Activated naive CD4-positive, alpha-beta T cell treated with anti-CD3 and anti-CD28 coated beads for 36 hours (primary cell): ENCODE measurements at regions of chr5 and their contacts with region 1.

Region 1: DNA sequence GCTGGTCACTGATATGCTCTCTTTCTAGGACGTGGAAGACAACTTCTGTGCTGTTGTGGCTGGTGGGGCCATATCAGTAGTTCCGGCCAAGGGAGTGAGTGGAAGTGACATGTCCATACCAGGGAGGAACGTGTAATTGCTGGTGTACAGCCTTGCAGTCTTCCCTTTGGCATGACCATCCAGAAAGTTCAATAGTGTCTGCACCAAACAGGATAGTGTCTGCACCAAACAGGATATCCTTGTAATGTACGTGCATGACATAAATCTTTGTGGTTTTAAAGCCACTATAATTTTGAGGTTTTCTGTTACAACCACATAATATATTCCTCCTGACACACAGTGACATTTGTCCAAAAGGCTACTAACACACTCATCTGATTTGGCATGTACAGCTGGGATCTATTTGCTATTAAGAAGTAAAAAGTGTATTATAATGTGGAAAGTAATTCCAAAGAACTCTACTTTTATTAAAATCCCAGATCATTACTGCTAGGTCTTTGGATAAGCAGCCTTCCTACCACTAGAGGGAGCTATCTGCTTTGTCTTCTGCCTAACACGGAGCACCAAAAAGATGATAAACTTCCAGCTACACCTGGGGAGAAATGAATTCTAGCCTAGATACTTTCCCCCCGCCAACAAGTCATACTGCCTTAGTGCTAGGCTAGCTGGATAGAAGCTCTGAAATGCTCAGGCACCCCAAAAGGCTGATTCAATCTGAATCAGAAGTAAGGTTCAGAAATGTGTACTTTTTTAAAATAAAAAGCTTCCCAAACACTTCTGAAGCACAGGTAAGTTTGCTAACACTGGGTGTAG is 52.7 kb downstream of the RNF145 start:
- DNase-seq: peak; percentile 58
- H3K4me3 Mint-ChIP-seq: no peak overlapping the region
- H3K27ac Mint-ChIP-seq: peak overlapping the region; percentile 35
- H3K4me1 Mint-ChIP-seq: peaks cover 36% of the 10 kb centered on the region
- H3K27me3 Mint-ChIP-seq: no peaks in the 10 kb centered on the region

Region 2: DNA sequence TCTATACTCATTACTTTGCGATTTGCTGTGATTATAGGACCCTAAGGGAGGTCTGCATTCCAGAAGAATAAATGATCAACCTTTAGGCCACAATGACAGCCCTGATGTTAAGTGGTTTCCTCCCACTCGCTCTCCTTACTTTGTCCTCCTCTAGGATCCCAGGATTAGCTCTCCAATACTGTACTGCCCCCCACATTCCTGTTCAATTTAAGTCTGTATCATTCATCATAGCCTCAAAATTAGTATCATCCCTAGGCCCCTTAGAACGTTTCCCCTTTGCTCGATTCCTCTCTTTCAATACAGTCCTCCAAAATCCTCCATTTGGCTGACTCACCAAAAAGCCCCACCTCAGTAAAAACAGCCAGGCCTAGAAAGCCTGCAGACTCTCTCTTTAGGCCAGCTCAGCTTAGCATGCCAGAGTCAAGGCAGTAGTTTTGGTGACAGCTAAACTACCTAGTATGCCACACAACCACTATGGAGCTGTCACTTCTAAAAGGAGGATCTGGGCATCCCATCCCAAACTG is 28.3 kb after region 1 on chr5:
- CTCF ChIA-PET with region 1: interaction called, 13 read pairs
- intact Hi-C with region 1: no loop called
- DNase-seq: peak; percentile 74
- H3K4me3 Mint-ChIP-seq: no peak overlapping the region
- H3K27ac Mint-ChIP-seq: peak overlapping the region; percentile 84
- H3K4me1 Mint-ChIP-seq: peaks cover 74% of the 10 kb centered on the region
- H3K27me3 Mint-ChIP-seq: no peaks in the 10 kb centered on the region

Region 3: GRCh38 chr5:159215886-159216285 is 59.3 kb after region 1 on chr5:
- CTCF ChIA-PET with region 1: interaction called, 14 read pairs
- intact Hi-C with region 1: no loop called
- DNase-seq: no peak
- H3K4me3 Mint-ChIP-seq: no peak overlapping the region
- H3K27ac Mint-ChIP-seq: no peak overlapping the region
- H3K4me1 Mint-ChIP-seq: peaks cover 20% of the 10 kb centered on the region
- H3K27me3 Mint-ChIP-seq: no peaks in the 10 kb centered on the region

Region 4: DNA sequence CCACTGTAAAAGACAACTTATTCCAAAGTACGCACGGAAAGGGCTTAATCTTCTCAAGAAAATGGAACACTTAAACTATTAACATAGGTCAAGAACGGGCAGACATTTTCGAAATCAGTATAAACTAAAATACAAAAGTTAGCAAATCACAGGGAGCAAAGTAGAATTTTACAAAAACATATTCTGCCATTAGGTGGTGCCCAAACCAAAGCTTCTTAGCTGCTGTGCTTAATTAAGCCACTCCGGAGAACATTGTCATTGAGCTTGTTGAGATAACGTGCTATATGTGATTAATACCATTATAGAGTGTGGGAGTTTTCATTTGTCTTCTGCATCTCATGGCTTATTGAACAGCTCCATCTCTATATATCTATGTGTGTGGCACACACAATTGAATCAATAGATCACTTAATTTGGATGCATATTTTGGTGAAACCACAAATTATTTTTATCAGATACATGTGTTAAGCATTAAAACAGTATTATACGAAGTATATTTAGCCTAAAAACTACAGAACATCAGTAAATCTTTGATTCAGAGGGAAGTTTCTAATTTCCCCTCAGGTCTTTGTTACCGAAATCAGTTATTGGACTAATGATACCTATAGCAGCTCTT is 129.9 kb after region 1 on chr5:
- CTCF ChIA-PET with region 1: interaction called, 14 read pairs
- intact Hi-C with region 1: loop called (anchors 1 kb)
- DNase-seq: no peak
- H3K4me3 Mint-ChIP-seq: no peak overlapping the region
- H3K27ac Mint-ChIP-seq: no peak overlapping the region
- H3K4me1 Mint-ChIP-seq: no peaks in the 10 kb centered on the region
- H3K27me3 Mint-ChIP-seq: no peaks in the 10 kb centered on the region

Region 5: GRCh38 chr5:159316519-159317383 is 160.1 kb after region 1 on chr5:
- CTCF ChIA-PET with region 1: interaction called, 56 read pairs
- intact Hi-C with region 1: loop called (anchors 1 kb)
- DNase-seq: peak; percentile 73
- H3K4me3 Mint-ChIP-seq: no peak overlapping the region
- H3K27ac Mint-ChIP-seq: no peak overlapping the region
- H3K4me1 Mint-ChIP-seq: no peaks in the 10 kb centered on the region
- H3K27me3 Mint-ChIP-seq: no peaks in the 10 kb centered on the region

Region 6: GRCh38 chr5:159515909-159516415 is 359.3 kb after region 1 on chr5:
- CTCF ChIA-PET with region 1: interaction called, 3 read pairs
- intact Hi-C with region 1: loop called (anchors 2 kb)
- DNase-seq: peak; percentile 87
- H3K4me3 Mint-ChIP-seq: no peak overlapping the region
- H3K27ac Mint-ChIP-seq: no peak overlapping the region
- H3K4me1 Mint-ChIP-seq: peaks cover 9% of the 10 kb centered on the region
- H3K27me3 Mint-ChIP-seq: peaks cover 4% of the 10 kb centered on the region

Region 7: DNA sequence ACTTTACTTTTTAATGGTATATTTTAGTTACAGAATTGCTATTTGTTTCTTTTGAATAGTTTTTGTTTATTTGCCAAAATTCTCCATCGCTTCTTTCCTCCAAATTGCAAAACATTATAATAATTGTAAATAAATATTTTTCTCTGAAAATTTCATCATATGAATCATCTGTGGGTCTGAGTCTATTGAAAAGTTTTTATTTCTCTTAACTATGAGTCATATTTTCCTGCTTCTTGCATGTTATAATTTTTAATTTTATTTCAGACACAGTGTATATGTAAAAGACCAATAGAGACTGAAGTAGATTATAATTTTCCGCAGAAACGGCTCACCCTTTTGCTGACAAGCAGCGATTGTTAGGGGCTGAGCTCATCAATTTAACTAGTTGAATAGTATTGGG is 452.7 kb after region 1 on chr5:
- CTCF ChIA-PET with region 1: no interaction called
- intact Hi-C with region 1: no loop called
- DNase-seq: no peak
- H3K4me3 Mint-ChIP-seq: no peak overlapping the region
- H3K27ac Mint-ChIP-seq: no peak overlapping the region
- H3K4me1 Mint-ChIP-seq: peaks cover 28% of the 10 kb centered on the region
- H3K27me3 Mint-ChIP-seq: no peaks in the 10 kb centered on the region

Region 8: DNA sequence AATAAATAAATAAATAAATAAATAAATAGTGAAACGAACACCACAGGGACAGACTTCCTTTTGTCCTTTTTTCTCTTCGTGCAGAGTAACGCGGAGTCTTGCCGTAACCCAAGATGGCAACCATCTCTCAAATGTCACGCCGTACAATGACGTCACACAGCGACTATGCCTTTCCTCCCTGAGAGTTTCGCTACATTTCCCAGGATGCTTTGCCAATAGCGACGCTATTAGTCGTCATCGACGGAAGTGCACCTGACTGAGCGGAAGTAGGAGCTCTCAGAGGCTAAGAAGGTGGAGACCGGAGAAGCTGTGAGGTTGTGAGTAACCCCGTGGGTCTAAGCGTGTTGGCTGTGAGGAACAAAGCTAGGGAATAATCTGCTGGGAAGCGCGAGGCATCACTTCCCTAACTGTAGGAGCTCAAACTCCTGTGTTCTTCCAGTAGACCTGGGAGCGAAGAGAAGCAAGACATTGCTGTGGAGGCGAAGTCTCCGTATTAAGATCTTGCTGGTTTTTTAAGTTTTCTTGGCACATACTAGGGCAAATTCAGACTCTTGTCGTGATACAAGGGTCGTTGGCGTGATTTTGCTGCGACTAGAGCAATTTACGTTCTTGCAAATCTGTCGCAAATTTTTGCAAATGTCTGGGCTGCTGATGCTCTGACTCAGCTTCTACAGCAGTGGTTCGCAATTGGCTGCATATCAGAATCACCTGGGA is 852.4 kb after region 1 on chr5 and contains the start of gene TTC1:
- CTCF ChIA-PET with region 1: no interaction called
- intact Hi-C with region 1: no loop called
- DNase-seq: peak; percentile 98
- H3K4me3 Mint-ChIP-seq: peak within 1 kb of the TSS; percentile 98
- H3K27ac Mint-ChIP-seq: peak within 1 kb of the TSS; percentile 94
- H3K4me1 Mint-ChIP-seq: peaks cover 27% of the 10 kb centered on the region
- H3K27me3 Mint-ChIP-seq: no peaks in the 10 kb centered on the region
- total RNA-seq, gene TTC1: 46.0 to 47.1 TPM